Activated CD4-positive, alpha-beta memory T cell treated with anti-CD3 and anti-CD28 coated beads for 36 hours (primary cell): ENCODE measurements at regions of chr16 and their contacts with region 1.

Region 1: GRCh38 chr16:19555162-19555937 is at the start of gene VPS35L:
- DNase-seq: peak; percentile 97
- H3K4me3 Mint-ChIP-seq: peak within 1 kb of the TSS; percentile 85
- H3K27ac Mint-ChIP-seq: peak within 1 kb of the TSS; percentile 86
- H3K4me1 Mint-ChIP-seq: peaks cover 16% of the 10 kb centered on the region
- H3K27me3 Mint-ChIP-seq: no peaks in the 10 kb centered on the region
- total RNA-seq, gene VPS35L: 33.9 to 38.0 TPM

Region 2: GRCh38 chr16:19502395-19503131 is 52.8 kb before region 1 on chr16:
- CTCF ChIA-PET with region 1: interaction called, 12 read pairs
- POLR2A ChIA-PET with region 1: no interaction called
- intact Hi-C with region 1: no loop called
- DNase-seq: peak; percentile 76
- H3K4me3 Mint-ChIP-seq: no peak overlapping the region
- H3K27ac Mint-ChIP-seq: no peak overlapping the region
- H3K4me1 Mint-ChIP-seq: no peaks in the 10 kb centered on the region
- H3K27me3 Mint-ChIP-seq: no peaks in the 10 kb centered on the region

Region 3: DNA sequence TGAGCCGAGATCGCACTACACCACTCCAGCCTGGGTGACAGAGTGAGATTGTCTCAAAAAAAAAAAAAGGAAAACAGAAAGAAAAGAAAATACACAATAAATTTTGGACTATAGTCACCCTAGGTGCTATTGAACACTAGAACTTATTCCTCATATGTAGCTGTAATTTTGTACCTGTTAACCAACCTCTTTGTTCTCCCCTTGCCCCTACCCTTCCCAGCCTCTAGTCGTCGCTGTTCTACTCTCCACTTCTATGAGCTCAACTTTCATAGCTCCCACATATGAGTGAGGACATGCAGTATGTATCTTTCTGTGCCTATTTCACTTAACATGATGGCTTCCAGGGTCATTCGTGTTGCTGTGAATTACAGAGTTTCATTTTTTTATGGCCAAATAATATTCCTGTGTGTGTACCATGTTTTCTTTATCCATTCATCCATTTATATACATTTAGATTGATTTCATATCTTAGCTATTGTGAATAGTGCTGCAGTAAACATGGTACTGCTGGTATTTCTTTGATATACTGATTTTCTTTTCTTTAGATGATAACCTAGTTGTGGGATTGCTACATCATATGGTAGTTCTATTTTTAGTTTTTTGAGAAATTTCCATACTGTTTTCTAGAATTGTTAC is 28.4 kb after region 1 on chr16:
- CTCF ChIA-PET with region 1: interaction called, 16 read pairs
- POLR2A ChIA-PET with region 1: interaction called, 3 read pairs
- intact Hi-C with region 1: no loop called
- DNase-seq: peak; percentile 32
- H3K4me3 Mint-ChIP-seq: no peak overlapping the region
- H3K27ac Mint-ChIP-seq: no peak overlapping the region
- H3K4me1 Mint-ChIP-seq: peaks cover 9% of the 10 kb centered on the region
- H3K27me3 Mint-ChIP-seq: no peaks in the 10 kb centered on the region

Region 4: GRCh38 chr16:19621445-19621844 is 66.1 kb after region 1 on chr16:
- CTCF ChIA-PET with region 1: no interaction called
- POLR2A ChIA-PET with region 1: no interaction called
- intact Hi-C with region 1: no loop called
- DNase-seq: no peak
- H3K4me3 Mint-ChIP-seq: no peak overlapping the region
- H3K27ac Mint-ChIP-seq: no peak overlapping the region
- H3K4me1 Mint-ChIP-seq: no peaks in the 10 kb centered on the region
- H3K27me3 Mint-ChIP-seq: no peaks in the 10 kb centered on the region

Region 5: GRCh38 chr16:19655242-19655777 is 100.0 kb after region 1 on chr16:
- CTCF ChIA-PET with region 1: no interaction called
- POLR2A ChIA-PET with region 1: no interaction called
- intact Hi-C with region 1: no loop called
- DNase-seq: no peak
- H3K4me3 Mint-ChIP-seq: no peak overlapping the region
- H3K27ac Mint-ChIP-seq: no peak overlapping the region
- H3K4me1 Mint-ChIP-seq: peaks cover 1% of the 10 kb centered on the region
- H3K27me3 Mint-ChIP-seq: no peaks in the 10 kb centered on the region

Region 6: GRCh38 chr16:19717771-19718602 is 162.6 kb after region 1 on chr16 and contains the starts of genes IQCK and KNOP1:
- CTCF ChIA-PET with region 1: interaction called, 8 read pairs
- POLR2A ChIA-PET with region 1: interaction called, 3 read pairs
- intact Hi-C with region 1: loop called (anchors 1 kb)
- DNase-seq: peak; percentile 93
- H3K4me3 Mint-ChIP-seq: peak within 1 kb of the TSS; percentile 92
- H3K27ac Mint-ChIP-seq: peak within 1 kb of the TSS; percentile 79
- H3K4me1 Mint-ChIP-seq: peaks cover 27% of the 10 kb centered on the region
- H3K27me3 Mint-ChIP-seq: no peaks in the 10 kb centered on the region
- total RNA-seq, gene IQCK: 2.2 to 3.0 TPM
- total RNA-seq, gene KNOP1: 24.3 to 26.4 TPM

Region 7: DNA sequence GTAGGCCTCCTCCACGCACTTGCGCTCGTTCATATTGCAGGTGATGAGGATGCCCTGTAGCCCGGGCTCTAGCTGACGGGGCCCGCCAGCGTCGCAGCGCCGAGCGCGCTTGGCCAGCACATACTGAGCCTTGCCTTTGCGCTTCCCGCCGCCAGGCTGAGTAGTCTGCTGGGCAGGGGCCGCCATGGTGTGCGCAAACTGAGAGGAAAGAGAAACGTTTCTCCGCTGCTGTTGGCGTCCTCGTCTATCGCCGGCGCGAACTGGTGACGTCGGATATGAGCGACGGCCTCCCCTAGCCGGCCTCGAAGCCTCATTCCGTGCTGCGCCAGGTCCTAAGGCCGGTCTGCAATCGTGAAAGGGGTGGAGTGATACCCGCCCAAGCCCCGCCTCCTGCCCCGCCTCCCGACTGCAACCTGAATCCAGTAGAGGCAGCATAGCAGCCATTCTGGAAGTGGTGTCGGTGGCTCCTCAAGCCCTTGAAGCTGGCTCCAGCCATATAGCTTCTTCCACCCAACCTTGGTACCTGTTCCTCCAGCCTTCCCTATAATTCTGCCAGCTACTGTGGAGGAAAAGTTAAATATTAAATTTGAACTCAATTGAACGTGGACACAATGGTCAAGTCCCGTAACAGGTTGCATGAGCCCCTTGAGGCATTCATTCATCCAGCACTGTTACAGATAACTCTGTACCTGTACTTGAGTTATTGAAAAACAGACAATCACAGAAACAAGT is 1186.4 kb after region 1 on chr16 and contains the start of gene THUMPD1:
- CTCF ChIA-PET with region 1: no interaction called
- POLR2A ChIA-PET with region 1: no interaction called
- intact Hi-C with region 1: loop called (anchors 1 kb)
- DNase-seq: peak; percentile 99
- H3K4me3 Mint-ChIP-seq: peak within 1 kb of the TSS; percentile 92
- H3K27ac Mint-ChIP-seq: peak within 1 kb of the TSS; percentile 95
- H3K4me1 Mint-ChIP-seq: peaks cover 23% of the 10 kb centered on the region
- H3K27me3 Mint-ChIP-seq: no peaks in the 10 kb centered on the region
- total RNA-seq, gene THUMPD1: 42.7 to 43.1 TPM